Activated T-helper 1 cell treated with anti-CD3 and anti-CD28 coated beads, Interleukin-12 subunit alpha, Interleukin-12 subunit beta, Interleukin-2, Interleukin-4 antibody, amounts not matched to agents 30 ng/mL and 10 ng/mL and 1 ng/mL, durations not matched to agents 14 hours and 24 hours and 36 hours (primary cell): ENCODE measurements at regions of chr2 and their contacts with region 1.

Region 1: DNA sequence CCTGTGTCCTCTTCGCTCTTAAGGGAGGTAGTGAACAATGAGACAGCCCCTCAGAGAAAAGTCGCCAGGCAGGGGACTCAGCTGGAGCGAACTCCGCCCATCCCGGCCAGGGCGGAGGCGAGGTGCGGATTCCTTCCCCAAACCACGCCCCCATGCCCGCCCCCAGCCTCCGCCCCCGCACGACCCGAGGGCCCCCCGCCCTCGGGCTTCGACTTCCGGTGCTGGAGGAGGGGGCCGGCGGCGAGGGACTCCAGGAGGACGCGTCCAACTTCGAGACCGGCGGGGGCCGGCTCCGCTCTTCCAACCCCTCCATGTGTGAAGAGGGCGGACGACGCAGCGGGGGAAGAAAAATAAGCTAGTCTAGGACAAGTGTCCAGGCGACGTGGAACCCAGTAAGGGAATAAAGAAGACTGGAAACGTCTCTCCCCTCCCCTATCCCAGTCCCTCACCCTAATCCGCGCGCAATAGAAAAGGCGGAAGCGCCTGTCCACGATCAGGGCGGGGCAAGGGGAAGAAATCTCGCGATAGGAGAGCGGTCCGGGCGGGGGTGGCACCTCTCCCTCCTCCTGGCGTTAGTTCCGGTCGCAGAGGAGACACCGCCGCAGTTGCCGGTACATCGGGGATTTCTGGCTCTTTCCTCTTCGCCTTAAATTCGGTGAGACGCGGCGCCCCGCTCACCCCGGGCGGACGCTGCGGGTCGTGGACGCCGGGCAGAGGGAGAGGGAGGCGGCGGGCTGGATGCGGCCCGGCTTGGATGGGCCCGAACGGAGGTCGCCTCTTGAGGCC is at the start of gene BZW1:
- DNase-seq: peak; percentile 96
- H3K4me3 Mint-ChIP-seq: peak within 1 kb of the TSS; percentile 100
- H3K27ac Mint-ChIP-seq: peak within 1 kb of the TSS; percentile 99
- H3K4me1 Mint-ChIP-seq: peaks cover 58% of the 10 kb centered on the region
- H3K27me3 Mint-ChIP-seq: no peaks in the 10 kb centered on the region
- total RNA-seq, gene BZW1: 446 and 447 TPM in 2 replicates

Region 2: GRCh38 chr2:199911052-199911876 is 900.3 kb before region 1 on chr2 and contains the start of gene C2orf69:
- intact Hi-C with region 1: loop called (anchors 1 kb)
- DNase-seq: peak; percentile 86
- H3K4me3 Mint-ChIP-seq: peak within 1 kb of the TSS; percentile 100
- H3K27ac Mint-ChIP-seq: peak within 1 kb of the TSS; percentile 99
- H3K4me1 Mint-ChIP-seq: peaks cover 39% of the 10 kb centered on the region
- H3K27me3 Mint-ChIP-seq: peaks cover 3% of the 10 kb centered on the region
- total RNA-seq, gene C2orf69: 16.6 and 18.0 TPM in 2 replicates

Region 3: GRCh38 chr2:200454927-200455801 is 356.4 kb before region 1 on chr2:
- intact Hi-C with region 1: loop called (anchors 1 kb)
- DNase-seq: no peak
- H3K4me3 Mint-ChIP-seq: peak overlapping the region; percentile 31
- H3K27ac Mint-ChIP-seq: peak overlapping the region; percentile 18
- H3K4me1 Mint-ChIP-seq: peaks cover 27% of the 10 kb centered on the region
- H3K27me3 Mint-ChIP-seq: no peaks in the 10 kb centered on the region

Region 4: DNA sequence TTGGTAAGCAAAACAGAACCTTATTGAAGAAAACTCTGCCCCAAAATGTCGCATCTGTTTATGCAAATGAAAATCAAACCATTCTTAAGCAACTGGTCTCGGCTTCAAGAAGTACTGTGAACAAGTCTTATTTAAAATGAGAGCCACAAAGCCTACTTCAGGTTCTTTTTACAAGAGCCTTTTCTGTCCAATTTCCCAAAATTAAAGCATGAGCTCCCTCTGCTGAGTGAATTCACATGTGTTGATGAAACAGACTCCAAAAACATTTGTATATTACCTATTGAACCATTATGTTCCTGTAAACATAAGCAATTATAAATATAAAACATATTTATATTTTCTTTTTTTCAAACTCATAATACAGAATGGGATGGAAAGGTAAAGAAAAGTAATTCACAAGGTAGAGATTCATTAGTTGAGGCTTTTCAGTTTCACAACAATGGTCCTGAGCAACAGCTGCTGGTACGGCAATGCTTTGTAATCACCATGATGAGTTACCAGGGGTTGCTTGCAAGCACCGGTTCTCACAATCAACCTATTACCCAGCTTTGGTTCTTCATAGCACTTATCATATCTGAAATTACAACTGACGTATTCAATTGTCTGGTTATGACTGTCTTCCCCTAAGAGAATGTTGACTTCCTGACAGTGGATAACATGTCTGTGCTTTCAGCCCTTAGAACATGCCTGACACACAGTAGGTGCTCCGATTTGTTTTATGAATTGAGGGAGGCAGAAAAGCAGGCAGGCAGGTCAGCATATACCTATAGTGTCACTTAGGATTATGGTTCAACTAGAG is 108.2 kb before region 1 on chr2:
- intact Hi-C with region 1: loop called (anchors 2 kb)
- DNase-seq: peak; percentile 4
- H3K4me3 Mint-ChIP-seq: peak overlapping the region; percentile 35
- H3K27ac Mint-ChIP-seq: peak overlapping the region; percentile 82
- H3K4me1 Mint-ChIP-seq: peaks cover 48% of the 10 kb centered on the region
- H3K27me3 Mint-ChIP-seq: no peaks in the 10 kb centered on the region

Region 5: GRCh38 chr2:200888704-200889625 is 77.4 kb after region 1 on chr2 and contains the starts of genes NIF3L1 and PPIL3:
- intact Hi-C with region 1: loop called (anchors 1 kb)
- DNase-seq: peak; percentile 96
- H3K4me3 Mint-ChIP-seq: peak within 1 kb of the TSS; percentile 97
- H3K27ac Mint-ChIP-seq: peak within 1 kb of the TSS; percentile 99
- H3K4me1 Mint-ChIP-seq: peaks cover 54% of the 10 kb centered on the region
- H3K27me3 Mint-ChIP-seq: no peaks in the 10 kb centered on the region
- total RNA-seq, gene NIF3L1: 26.6 and 27.3 TPM in 2 replicates
- total RNA-seq, gene PPIL3: 44.2 TPM in 2 replicates

Region 6: DNA sequence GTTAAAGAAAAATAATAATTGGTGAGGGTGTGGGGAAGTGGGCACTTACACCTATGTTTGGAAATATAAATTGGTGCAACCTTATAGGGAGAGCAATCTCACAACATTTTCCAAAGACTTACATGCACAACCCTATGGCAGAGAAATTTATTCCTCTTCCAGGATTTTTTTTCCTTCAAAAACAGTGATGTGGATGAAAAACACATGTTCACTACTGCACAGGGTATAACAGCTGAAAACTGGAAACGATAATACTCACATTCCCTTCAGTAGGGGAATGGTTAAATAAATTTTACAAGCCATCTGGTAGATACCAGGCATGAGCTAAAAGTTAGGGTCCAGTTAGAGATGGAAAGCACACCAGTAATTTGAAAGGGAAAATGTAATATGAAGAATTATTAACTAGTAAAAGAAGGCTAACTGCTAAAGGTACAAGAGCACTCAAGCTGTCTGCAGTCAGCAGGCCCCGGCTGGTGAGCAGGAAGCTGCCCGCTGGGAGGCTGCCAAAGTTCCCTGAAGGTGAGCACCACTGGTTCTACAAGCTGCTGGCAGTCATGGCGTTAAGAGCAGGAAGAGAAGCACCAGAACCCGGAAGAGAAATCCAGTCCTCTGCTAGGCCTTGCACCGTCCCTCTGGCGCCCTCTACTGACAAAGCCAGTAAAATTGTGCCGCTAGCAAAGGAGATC is 420.4 kb after region 1 on chr2:
- intact Hi-C with region 1: loop called (anchors 2 kb)
- DNase-seq: peak; percentile 88
- H3K4me3 Mint-ChIP-seq: peak overlapping the region; percentile 93
- H3K27ac Mint-ChIP-seq: peak overlapping the region; percentile 87
- H3K4me1 Mint-ChIP-seq: peaks cover 57% of the 10 kb centered on the region
- H3K27me3 Mint-ChIP-seq: no peaks in the 10 kb centered on the region

Region 7: GRCh38 chr2:201996006-201996405 is 1184.5 kb after region 1 on chr2:
- intact Hi-C with region 1: no loop called
- DNase-seq: no peak
- H3K4me3 Mint-ChIP-seq: no peak overlapping the region
- H3K27ac Mint-ChIP-seq: no peak overlapping the region
- H3K4me1 Mint-ChIP-seq: no peaks in the 10 kb centered on the region
- H3K27me3 Mint-ChIP-seq: peaks cover 2% of the 10 kb centered on the region

Region 8: DNA sequence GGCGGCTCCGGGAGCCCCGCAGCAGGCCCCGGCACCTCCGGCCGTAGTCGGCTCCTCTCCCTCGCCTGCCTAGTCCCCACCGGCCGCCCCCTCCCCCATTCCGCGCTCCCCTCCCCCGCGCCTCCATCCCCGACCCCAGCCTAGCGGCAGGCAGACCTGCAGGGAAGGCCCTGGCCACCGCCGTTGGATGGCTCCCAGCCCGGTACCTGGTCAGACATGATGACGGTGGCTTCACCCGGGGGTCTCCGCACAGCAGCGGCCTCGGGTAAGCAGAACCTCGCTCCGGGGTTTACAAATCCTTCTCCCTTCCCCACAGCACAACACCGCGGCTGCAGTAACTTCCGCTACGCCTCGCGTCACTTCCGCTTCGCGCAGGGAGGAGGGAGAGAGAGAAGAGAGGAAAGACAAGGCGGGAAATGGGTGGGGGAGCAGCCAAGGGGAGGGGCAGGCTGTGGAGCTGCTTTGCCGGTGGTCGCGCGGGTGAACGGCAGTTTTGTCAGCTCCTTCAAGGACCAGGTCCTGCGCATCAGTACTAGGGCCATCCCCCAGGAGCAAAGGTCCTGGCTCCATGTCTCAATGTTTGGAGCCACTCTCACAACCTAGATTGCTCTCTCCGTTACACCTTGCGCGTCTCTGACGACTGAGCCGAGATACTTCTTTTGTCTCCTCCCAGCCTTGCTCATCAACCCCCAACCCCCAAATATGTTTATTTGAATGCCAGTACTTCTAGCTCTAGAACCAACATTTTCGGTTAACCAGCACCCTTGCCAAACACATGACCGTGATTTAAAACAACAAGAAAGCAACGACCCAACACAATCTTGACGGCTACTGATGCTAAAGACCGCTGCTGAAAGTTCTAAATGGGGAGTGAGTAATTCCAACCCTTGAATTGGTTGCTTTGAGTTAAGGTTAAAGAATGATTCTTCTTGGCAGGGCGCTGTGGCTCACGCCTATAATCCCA is 1427.0 kb after region 1 on chr2 and contains the start of gene SUMO1:
- intact Hi-C with region 1: loop called (anchors 2 kb)
- DNase-seq: peak; percentile 89
- H3K4me3 Mint-ChIP-seq: peak within 1 kb of the TSS; percentile 98
- H3K27ac Mint-ChIP-seq: peak within 1 kb of the TSS; percentile 93
- H3K4me1 Mint-ChIP-seq: peaks cover 26% of the 10 kb centered on the region
- H3K27me3 Mint-ChIP-seq: peaks cover 4% of the 10 kb centered on the region
- total RNA-seq, gene SUMO1: 126 and 127 TPM in 2 replicates